Activated CD4-positive, alpha-beta T cell treated with anti-CD3 and anti-CD28 coated beads for 36 hours (primary cell): ENCODE measurements at regions of chr17 and their contacts with region 1.

Region 1: GRCh38 chr17:7627250-7628121 is at the start of gene SAT2:
- DNase-seq: peak; percentile 91
- ATAC-seq: peak; percentile 94
- H3K4me3 Mint-ChIP-seq: peak within 1 kb of the TSS; percentile 83
- H3K27ac Mint-ChIP-seq: peak within 1 kb of the TSS; percentile 78
- H3K4me1 Mint-ChIP-seq: peaks cover 11% of the 10 kb centered on the region
- H3K27me3 Mint-ChIP-seq: no peaks in the 10 kb centered on the region
- total RNA-seq, gene SAT2: 15.9 to 22.2 TPM

Region 2: GRCh38 chr17:7523033-7523432 is 104.5 kb before region 1 on chr17:
- CTCF ChIA-PET with region 1: no interaction called
- POLR2A ChIA-PET with region 1: no interaction called
- intact Hi-C with region 1: no loop called
- DNase-seq: peak; percentile 67
- ATAC-seq: peak; percentile 81
- H3K4me3 Mint-ChIP-seq: no peak overlapping the region
- H3K27ac Mint-ChIP-seq: no peak overlapping the region
- H3K4me1 Mint-ChIP-seq: no peaks in the 10 kb centered on the region
- H3K27me3 Mint-ChIP-seq: no peaks in the 10 kb centered on the region

Region 3: DNA sequence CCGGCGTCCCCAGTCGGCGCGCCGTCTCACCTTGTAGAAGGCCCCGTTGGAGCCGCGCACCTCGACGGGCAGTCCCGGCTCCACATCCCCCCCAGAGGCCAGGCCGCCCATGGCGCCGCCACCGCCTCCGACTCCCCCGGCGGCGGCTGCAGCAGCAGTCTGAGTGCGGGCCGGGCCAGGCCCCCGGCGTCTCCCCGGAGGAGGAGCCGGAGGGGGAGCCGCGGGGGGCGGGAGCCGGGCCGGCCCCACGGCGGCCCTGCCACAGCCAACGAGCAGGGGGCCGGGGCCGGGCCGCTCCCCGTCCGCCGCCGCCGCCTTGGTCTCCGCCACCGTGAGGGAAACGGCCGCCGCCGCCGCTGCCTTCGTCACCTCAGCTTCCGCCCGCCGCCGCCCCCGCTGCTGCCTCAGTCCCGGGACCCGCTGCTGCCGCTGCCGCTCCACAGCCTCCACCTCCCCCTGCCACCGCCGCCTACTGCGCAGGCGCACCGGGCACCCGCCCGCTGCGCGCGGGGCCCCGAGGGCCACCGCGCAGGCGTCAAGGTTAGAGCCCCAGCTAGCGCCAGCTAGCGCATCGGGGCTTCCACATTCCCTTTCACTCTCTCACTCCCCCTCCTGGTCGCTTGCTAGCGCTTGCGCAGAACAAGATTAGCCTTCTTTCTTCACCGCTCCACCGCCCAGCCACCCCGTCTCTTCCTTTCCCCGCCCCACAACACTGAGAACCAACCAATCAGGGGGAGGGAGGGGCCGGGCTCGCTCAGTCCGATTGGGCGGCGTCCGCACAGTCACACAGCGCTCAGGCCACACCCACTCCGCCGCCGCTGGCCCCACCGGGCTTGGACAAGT is 12.8 kb before region 1 on chr17 and contains the start of gene FXR2:
- CTCF ChIA-PET with region 1: interaction called, 5 read pairs
- POLR2A ChIA-PET with region 1: interaction called, 7 read pairs
- intact Hi-C with region 1: loop called (anchors 1 kb)
- DNase-seq: peak; percentile 100
- ATAC-seq: peak; percentile 95
- H3K4me3 Mint-ChIP-seq: peak within 1 kb of the TSS; percentile 85
- H3K27ac Mint-ChIP-seq: peak within 1 kb of the TSS; percentile 93
- H3K4me1 Mint-ChIP-seq: peaks cover 32% of the 10 kb centered on the region
- H3K27me3 Mint-ChIP-seq: no peaks in the 10 kb centered on the region
- total RNA-seq, gene FXR2: 35.6 to 50.2 TPM

Region 4: GRCh38 chr17:7650509-7651096 is 23.1 kb after region 1 on chr17 and contains the start of gene ATP1B2:
- CTCF ChIA-PET with region 1: interaction called, 9 read pairs
- POLR2A ChIA-PET with region 1: no interaction called
- intact Hi-C with region 1: loop called in 1 of 2 experiments (anchors 1 kb)
- DNase-seq: peak; percentile 82
- ATAC-seq: peak; percentile 92
- H3K4me3 Mint-ChIP-seq: peak within 1 kb of the TSS; percentile 62
- H3K27ac Mint-ChIP-seq: no peak within 1 kb of the TSS
- H3K4me1 Mint-ChIP-seq: peaks cover 17% of the 10 kb centered on the region
- H3K27me3 Mint-ChIP-seq: peaks cover 42% of the 10 kb centered on the region
- total RNA-seq, gene ATP1B2: 0.32 to 0.33 TPM

Region 5: DNA sequence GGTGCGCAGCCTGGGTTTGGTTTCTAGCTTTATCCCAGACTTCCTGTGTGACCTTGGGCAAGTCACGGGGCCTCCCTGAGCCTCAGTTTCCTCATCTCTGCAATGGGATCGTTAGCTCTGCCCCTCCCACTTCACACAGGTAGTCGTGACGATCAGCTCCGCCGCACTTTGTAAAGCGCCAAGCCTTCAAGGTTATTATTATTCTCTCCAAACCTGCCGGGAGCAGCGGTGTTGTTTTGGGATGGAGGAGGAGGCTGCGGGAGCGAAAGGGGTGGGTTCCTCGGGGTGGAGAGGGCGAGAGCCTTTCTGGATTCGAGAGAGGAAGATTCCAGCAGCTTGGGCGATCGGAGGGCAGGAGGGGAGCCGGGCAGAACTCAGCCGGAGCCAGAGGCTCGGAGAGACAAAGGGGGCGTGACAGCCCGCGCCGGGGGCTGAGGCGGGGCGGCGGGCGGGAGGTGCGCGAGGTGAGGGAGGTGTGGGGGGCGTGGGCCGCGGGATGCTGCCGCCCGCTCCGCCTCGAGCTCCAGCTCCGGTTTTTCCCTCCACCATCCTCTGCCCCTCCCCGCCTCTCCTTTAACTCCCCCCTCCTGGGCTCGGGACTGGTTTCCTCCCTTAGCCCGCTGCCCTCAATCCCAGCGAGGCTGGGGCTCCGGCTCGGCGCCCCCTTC is 77.2 kb after region 1 on chr17 and contains the start of gene EFNB3:
- CTCF ChIA-PET with region 1: no interaction called
- POLR2A ChIA-PET with region 1: no interaction called
- intact Hi-C with region 1: no loop called
- DNase-seq: peak; percentile 23
- ATAC-seq: no peak
- H3K4me3 Mint-ChIP-seq: peak within 1 kb of the TSS; percentile 30
- H3K27ac Mint-ChIP-seq: no peak within 1 kb of the TSS
- H3K4me1 Mint-ChIP-seq: peaks cover 14% of the 10 kb centered on the region
- H3K27me3 Mint-ChIP-seq: peaks cover 43% of the 10 kb centered on the region
- total RNA-seq, gene EFNB3: not detected

Region 6: GRCh38 chr17:7794075-7794663 is 166.7 kb after region 1 on chr17:
- CTCF ChIA-PET with region 1: no interaction called
- POLR2A ChIA-PET with region 1: no interaction called
- intact Hi-C with region 1: no loop called
- DNase-seq: no peak
- ATAC-seq: no peak
- H3K4me3 Mint-ChIP-seq: no peak overlapping the region
- H3K27ac Mint-ChIP-seq: no peak overlapping the region
- H3K4me1 Mint-ChIP-seq: no peaks in the 10 kb centered on the region
- H3K27me3 Mint-ChIP-seq: no peaks in the 10 kb centered on the region

Region 7: DNA sequence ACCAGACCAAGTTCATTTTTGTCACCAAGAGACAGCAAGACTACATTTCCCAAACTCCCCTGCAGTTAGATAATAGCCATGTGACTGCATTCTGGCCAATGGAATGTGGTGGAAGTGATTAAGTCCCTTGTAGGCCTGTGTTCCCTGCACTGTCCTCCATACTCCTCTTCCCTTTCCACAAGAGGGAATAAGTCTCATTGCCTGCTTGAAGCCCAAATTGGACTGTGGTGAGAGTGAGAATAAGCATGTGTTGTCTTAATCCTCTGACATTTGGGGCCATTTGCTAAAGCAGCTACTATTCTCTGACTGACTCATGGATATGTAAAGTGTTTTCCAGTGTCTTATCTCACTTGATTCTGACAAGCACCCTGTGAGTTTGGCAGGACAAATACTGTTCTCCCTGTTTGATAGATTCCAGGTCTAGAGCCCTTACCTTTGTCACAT is 1219.3 kb after region 1 on chr17:
- CTCF ChIA-PET with region 1: no interaction called
- POLR2A ChIA-PET with region 1: no interaction called
- intact Hi-C with region 1: no loop called
- DNase-seq: no peak
- ATAC-seq: peak; percentile 84
- H3K4me3 Mint-ChIP-seq: no peak overlapping the region
- H3K27ac Mint-ChIP-seq: no peak overlapping the region
- H3K4me1 Mint-ChIP-seq: peaks cover 4% of the 10 kb centered on the region
- H3K27me3 Mint-ChIP-seq: no peaks in the 10 kb centered on the region